PC-9 (cell line): ENCODE measurements at regions of chr3 and their contacts with region 1.

Region 1: DNA sequence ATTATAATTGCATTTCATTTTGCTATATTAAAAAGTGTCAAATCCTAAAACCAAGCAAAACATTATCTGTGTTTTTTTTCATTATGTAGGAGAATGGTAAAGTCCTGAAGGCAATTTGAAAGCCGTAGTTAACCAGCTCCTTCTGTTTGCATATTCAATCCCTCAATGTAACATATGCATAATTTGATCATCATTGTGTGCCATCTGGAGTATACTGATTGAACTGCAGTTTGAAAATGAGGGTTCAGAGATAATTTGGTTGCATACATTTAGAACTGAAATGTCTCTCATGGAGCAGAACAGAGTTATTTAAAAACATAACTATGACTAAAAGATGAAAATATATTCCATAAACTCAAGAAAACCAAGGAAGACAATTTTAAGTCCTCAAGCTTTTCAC is 518.6 kb downstream of the GBE1 start:
- DNase-seq: no peak
- H3K4me3 ChIP-seq: no peak overlapping the region
- H3K27ac ChIP-seq: no peak overlapping the region
- H3K4me1 ChIP-seq: no peaks in the 10 kb centered on the region
- H3K27me3 ChIP-seq: no peaks in the 10 kb centered on the region
- CTCF ChIP-seq: peak; percentile 60

Region 2: DNA sequence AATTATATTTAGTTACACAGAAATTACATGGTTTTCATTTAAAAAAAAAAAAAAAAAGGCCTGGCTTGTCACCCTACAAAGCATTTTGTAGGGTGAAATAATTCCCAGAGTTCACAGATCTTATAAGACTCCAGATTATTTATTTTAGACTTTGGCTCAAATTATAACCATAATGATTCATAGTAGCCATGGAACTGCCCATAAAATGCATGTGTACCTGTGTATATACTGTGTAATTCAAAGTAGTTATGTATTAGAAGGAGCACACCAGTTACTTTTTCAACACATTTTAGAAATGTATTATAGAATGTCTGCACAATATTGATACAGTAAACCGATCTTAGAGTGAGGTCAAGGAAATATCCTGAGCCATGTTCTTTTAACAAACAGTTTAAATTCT is 457.0 kb before region 1 on chr3:
- CTCF ChIA-PET with region 1: no interaction called
- POLR2A ChIA-PET with region 1: no interaction called
- intact Hi-C with region 1: loop called (anchors 2 kb)
- DNase-seq: no peak
- H3K4me3 ChIP-seq: no peak overlapping the region
- H3K27ac ChIP-seq: no peak overlapping the region
- H3K4me1 ChIP-seq: no peaks in the 10 kb centered on the region
- H3K27me3 ChIP-seq: no peaks in the 10 kb centered on the region
- CTCF ChIP-seq: no peak

Region 3: DNA sequence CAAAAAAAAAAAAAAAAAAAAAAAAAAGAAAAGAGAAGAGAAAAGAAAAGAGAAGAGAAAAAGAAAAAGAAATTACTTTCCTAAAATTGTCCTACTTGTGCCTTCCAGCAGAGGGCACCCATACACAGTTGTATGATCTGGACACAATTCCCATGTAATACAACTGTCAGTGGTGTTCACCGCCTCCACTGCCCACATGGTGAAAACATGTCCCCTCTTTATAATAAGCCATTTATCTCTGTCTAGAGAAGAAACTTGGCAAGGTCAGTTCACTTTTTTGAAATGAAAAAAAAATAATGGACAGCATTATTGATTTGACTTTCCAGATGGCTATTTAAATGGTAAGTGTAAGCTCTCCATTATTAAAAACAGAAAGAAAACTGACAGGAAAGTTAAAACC is 59.2 kb after region 1 on chr3:
- CTCF ChIA-PET with region 1: no interaction called
- POLR2A ChIA-PET with region 1: no interaction called
- intact Hi-C with region 1: no loop called
- DNase-seq: peak in 1 of 2 experiments; percentile 15
- H3K4me3 ChIP-seq: no peak overlapping the region
- H3K27ac ChIP-seq: no peak overlapping the region
- H3K4me1 ChIP-seq: no peaks in the 10 kb centered on the region
- H3K27me3 ChIP-seq: no peaks in the 10 kb centered on the region
- CTCF ChIP-seq: peak; percentile 74